GM18951 (cell line): ENCODE measurements at regions of chr10 and their contacts with region 1.

Region 1: DNA sequence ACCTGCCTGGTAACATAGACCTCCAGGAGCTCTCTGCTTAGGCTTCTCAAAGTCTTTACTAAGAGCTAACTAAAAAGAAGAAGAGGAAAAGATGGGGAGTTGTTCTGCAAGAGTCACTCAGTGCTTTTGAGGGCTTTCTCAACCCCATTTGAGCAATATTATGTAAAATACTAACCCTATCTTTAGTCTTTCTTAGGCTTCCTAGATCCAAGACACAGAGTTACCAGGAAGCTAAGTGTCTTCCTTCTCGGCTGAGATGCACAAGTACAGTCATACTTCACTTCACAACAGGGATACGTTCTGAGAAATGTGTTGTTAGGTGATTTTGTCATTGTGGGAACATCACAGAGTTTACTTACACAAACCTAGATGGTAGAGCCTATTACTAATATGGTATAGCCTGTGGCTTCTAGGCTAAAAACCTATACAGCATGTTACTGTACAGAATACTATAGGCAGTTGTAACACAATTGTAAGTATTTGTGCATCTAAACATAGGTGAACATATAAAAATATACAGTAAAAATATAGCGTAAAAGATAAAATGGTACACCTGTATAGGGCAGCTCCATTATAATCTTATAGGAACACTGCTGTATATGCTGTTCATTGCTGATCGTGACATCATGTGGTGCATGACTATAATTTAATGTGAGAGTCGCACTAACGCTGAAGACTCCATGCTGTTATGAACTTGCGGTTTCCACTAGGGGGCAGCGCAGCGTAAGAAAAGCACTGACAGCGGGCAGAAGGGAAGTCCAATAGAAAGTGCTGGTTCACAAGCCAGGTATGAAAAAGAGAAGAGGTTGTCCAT is 16.3 kb downstream of the ANKRD22 start:
- POLR2A ChIP-seq: no peak

Region 2: DNA sequence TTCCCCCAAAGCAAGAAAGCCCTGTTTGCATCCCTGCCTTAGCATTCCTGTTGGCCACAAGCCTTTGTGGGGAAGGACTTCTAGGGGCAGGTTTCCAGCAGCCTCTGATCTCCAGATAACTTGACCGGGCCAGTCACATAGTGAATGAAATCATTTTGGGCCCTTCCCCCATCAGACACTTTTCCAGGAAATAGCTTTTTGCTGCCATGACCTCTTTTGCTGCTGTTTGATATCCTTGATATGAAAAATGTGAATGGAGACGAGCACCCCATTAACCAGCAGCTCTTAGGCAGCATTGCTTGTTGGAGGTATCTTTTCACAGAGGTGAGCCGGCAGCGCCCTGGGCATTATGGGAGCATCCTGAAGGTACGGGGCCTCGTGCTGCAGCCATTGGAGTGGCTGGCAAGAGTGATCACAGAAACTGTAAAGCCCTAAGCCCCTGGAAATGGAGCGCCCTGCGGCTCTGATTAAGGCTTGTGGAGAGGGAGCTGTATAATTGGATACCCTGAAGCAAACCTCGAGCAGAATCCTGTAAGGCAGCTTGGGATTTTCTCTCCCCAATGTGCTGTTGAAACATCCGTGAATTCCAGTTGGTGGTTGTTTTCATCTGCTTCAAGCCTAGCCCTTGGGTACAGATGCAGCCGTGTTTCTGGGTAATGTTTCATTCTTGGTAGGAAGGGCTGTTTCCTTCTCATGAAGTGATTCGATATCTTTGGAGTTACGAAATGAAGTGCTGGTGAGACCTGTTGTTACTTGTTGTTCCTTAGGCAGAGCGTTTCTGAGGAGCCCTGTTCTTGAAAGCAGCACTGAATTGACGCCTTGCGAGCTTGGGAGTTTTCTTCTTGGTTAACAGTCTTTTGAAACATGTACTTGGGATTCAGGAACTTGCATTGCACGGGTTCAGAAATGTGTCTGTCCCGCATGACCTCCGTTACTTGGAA is 792.9 kb before region 1 on chr10:
- in situ Hi-C with region 1: no loop called
- POLR2A ChIP-seq: no peak

Region 3: GRCh38 chr10:88624840-88625239 is 210.5 kb before region 1 on chr10:
- in situ Hi-C with region 1: no loop called
- POLR2A ChIP-seq: no peak

Region 4: GRCh38 chr10:88926566-88927415 is 91.5 kb after region 1 on chr10:
- in situ Hi-C with region 1: loop called (anchors 10 kb)
- POLR2A ChIP-seq: no peak

Region 5: GRCh38 chr10:89019569-89020327 is 184.4 kb after region 1 on chr10:
- in situ Hi-C with region 1: loop called (anchors 10 kb)
- POLR2A ChIP-seq: no peak

Region 6: GRCh38 chr10:89062861-89063260 is 227.6 kb after region 1 on chr10:
- in situ Hi-C with region 1: no loop called
- POLR2A ChIP-seq: no peak

Region 7: GRCh38 chr10:89217057-89217990 is 382.0 kb after region 1 on chr10:
- in situ Hi-C with region 1: loop called (anchors 10 kb)
- POLR2A ChIP-seq: no peak